ENCODE measurements at regions of chr12 and their contacts with region 1.

Region 1: DNA sequence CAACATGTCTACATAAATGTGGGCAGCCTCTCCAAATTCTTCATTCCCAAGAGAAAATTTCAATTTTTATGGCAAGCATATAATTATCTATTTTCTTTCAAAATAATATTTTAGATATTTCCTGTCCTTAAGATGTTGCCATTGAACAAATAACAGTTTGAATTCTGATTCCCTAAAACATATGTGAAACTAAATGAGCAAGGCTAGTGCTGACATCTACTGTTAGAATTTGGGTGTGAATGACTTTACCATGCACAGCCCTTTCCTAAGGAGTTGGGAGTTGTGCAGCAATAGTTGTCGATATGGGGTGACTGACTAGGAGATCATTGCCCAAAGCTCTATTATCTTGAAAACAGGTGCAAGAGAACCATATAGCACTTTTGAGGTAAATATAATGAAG is 108.2 kb upstream of the SLC38A4 start:
- DNase-seq: no peak
- H3K4me3 ChIP-seq: no peak overlapping the region
- H3K27ac ChIP-seq: no peak overlapping the region
- H3K4me1 ChIP-seq: no peaks in the 10 kb centered on the region
- H3K27me3 ChIP-seq: no peaks in the 10 kb centered on the region
- CTCF ChIP-seq: peak; percentile 20 to 53 (median 45)
- EP300 ChIP-seq: no peak
- POLR2A ChIP-seq: no peak

Region 2: DNA sequence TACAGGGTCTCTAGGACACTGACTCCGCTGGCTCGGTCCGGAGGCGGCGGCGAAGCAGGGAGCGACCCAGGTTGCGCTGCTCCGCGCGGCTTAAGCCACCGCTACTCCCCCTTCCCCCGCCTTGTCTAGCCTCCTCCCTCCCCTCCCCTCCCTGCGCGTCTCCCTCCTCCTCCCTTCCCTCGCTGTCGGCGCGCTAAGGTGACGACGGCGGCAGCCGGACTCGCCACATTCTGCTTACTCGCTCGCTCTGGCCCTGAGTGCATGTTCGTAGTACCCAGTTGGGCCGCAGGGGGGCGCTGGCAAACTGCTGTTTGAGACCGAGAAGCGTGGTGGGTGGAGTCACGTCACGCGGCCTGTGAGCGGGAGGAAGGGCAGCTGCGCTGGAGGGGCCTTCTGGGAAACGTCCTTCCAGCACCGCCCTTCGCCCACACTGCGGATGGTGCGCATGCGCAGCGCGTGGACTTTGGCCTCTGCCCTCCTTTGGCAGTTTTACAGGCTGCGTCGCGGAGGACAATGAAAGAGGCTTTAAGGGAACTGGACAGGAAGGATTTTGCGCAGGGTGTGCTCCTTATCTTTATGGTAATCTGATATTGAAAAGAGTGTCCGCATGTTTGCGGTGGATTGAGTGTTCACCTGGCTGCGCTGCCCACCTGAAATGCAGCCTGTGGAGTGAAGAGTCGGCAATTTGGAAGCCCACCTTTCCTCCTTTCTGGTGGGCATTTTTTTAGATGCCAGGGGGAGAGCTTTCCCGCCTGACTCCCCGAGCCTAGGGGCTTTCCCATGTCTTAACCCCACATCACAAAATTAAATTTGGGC is 943.3 kb before region 1 on chr12 and contains the start of gene SCAF11:
- intact Hi-C with region 1: loop called (anchors 5 kb)
- DNase-seq: peak; percentile 100
- H3K4me3 ChIP-seq: peak within 1 kb of the TSS; percentile 71 to 92 (median 82)
- H3K27ac ChIP-seq: peak within 1 kb of the TSS; percentile 96 to 99 (median 98)
- H3K4me1 ChIP-seq: peaks cover 0 to 45% (median 36%) of the 10 kb centered on the region in 4 donors
- H3K27me3 ChIP-seq: no peaks in the 10 kb centered on the region
- CTCF ChIP-seq: peak; percentile 89 to 99 (median 96)
- EP300 ChIP-seq: peak in 2 of 4 donors; percentile 22 to 80
- POLR2A ChIP-seq: peak; percentile 90 to 95
- total RNA-seq, gene SCAF11: 116 to 165 (median 127) TPM

Region 3: GRCh38 chr12:46071769-46072624 is 862.0 kb before region 1 on chr12:
- intact Hi-C with region 1: loop called (anchors 5 kb)
- DNase-seq: peak; percentile 82
- H3K4me3 ChIP-seq: no peak overlapping the region
- H3K27ac ChIP-seq: peak overlapping the region in 3 of 4 donors; percentile 19 to 45 (median 41)
- H3K4me1 ChIP-seq: peaks cover 0 to 12% (median 10%) of the 10 kb centered on the region in 4 donors
- H3K27me3 ChIP-seq: no peaks in the 10 kb centered on the region
- CTCF ChIP-seq: peak; percentile 92 to 98 (median 94)
- EP300 ChIP-seq: no peak
- POLR2A ChIP-seq: no peak

Region 4: GRCh38 chr12:46124848-46125619 is 808.9 kb before region 1 on chr12:
- intact Hi-C with region 1: loop called (anchors 10 kb)
- DNase-seq: peak; percentile 75
- H3K4me3 ChIP-seq: peak overlapping the region in 3 of 4 donors; percentile 24 to 34 (median 31)
- H3K27ac ChIP-seq: peak overlapping the region; percentile 8 to 54 (median 44)
- H3K4me1 ChIP-seq: peaks cover 0 to 22% (median 20%) of the 10 kb centered on the region in 4 donors
- H3K27me3 ChIP-seq: no peaks in the 10 kb centered on the region
- CTCF ChIP-seq: peak; percentile 61 to 86 (median 75)
- EP300 ChIP-seq: no peak
- POLR2A ChIP-seq: no peak

Region 5: GRCh38 chr12:46342562-46343033 is 591.3 kb before region 1 on chr12:
- intact Hi-C with region 1: loop called (anchors 10 kb)
- DNase-seq: no peak
- H3K4me3 ChIP-seq: no peak overlapping the region
- H3K27ac ChIP-seq: no peak overlapping the region
- H3K4me1 ChIP-seq: peaks cover 0 to 9% (median 0%) of the 10 kb centered on the region in 4 donors
- H3K27me3 ChIP-seq: no peaks in the 10 kb centered on the region
- CTCF ChIP-seq: peak in 2 of 4 experiments; percentile 29 to 40
- EP300 ChIP-seq: no peak
- POLR2A ChIP-seq: no peak

Region 6: DNA sequence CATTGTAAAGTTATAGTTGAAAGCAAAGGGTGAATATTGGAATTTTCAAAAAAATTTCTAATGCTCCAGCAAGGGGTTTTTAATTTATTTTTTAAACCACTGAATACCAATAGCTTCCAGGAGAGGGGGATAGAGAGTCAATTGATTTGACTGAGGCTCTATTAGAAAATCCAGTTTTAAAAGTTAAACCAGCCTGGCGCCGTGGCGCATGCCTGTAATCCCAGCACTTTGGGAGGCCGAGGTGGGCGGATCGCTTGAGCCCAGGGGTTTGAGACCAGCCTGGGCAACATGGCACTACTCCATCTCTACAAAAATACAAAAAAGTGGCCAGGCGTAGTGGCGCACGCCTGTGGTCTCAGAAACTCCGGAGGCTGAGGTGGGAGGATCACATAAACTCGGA is 258.2 kb before region 1 on chr12:
- intact Hi-C with region 1: loop called (anchors 1 kb)
- DNase-seq: no peak
- H3K4me3 ChIP-seq: peak overlapping the region in 1 of 4 donors; percentile 1
- H3K27ac ChIP-seq: no peak overlapping the region
- H3K4me1 ChIP-seq: peaks cover 0 to 9% (median 0%) of the 10 kb centered on the region in 4 donors
- H3K27me3 ChIP-seq: no peaks in the 10 kb centered on the region
- CTCF ChIP-seq: peak; percentile 49 to 70 (median 68)
- EP300 ChIP-seq: no peak
- POLR2A ChIP-seq: no peak

Measured in sigmoid colon (tissue), 7 donors.